B cell (primary cell): ENCODE measurements at regions of chr17 and their contacts with region 1.

Region 1: DNA sequence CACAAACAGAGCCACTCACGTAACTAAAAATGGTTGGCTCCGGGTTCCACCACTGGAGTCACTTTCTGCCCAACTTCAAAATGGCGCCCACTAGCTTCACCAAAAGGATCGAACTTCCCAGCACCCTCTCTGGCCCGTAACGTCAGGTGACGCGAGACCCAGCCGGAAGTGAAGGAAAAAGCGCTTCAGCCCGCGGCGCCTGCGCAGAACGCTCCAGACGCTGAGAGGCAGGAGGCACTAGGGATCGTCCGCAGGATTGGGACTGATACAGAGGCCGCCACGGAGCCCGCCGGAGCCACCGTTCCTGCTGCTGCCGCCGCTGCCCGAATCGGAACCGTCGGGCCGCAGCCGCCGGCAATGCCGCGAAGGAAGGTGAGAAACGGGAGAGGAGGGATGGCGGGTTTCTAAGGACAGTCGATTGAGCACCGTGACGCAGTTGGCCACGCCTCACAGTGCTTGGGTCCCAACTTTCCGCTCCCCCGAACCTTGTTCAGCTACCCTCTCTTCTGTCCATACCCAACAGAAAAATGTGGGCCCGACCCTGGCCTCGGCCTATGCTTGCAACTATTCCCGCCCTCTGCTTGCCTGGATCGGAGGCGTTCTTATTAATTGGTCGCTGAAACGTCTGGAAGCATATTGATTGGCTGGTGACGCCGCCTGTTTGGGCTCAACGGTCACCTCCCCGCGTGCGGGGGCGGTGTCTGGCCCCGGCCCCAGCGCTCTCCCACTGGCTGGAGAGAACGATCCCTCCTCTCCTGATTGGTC is at the start of gene KAT7:
- DNase-seq: peak; percentile 99
- ATAC-seq: peak; percentile 83
- H3K4me3 ChIP-seq: peak within 1 kb of the TSS; percentile 68 to 100 (median 96)
- H3K4me3 Mint-ChIP-seq: peak within 1 kb of the TSS; percentile 98
- H3K27ac ChIP-seq: peak within 1 kb of the TSS; percentile 89 to 98
- H3K27ac Mint-ChIP-seq: peak within 1 kb of the TSS; percentile 99
- H3K4me1 ChIP-seq: peaks cover 18 to 20% of the 10 kb centered on the region in 2 donors
- H3K4me1 Mint-ChIP-seq: peaks cover 50% of the 10 kb centered on the region
- H3K27me3 ChIP-seq: no peaks in the 10 kb centered on the region
- H3K27me3 Mint-ChIP-seq: no peaks in the 10 kb centered on the region
- CTCF ChIP-seq: no peak
- total RNA-seq, gene KAT7: 124 and 127 TPM in 2 replicates

Region 2: GRCh38 chr17:48908047-48908843 is 880.4 kb before region 1 on chr17 and contains the start of gene UBE2Z:
- CTCF ChIA-PET with region 1: no interaction called
- POLR2A ChIA-PET with region 1: no interaction called
- intact Hi-C with region 1: loop called (anchors 2 kb)
- DNase-seq: peak; percentile 96
- ATAC-seq: peak; percentile 90
- H3K4me3 ChIP-seq: peak within 1 kb of the TSS; percentile 36 to 79 (median 72)
- H3K4me3 Mint-ChIP-seq: peak within 1 kb of the TSS; percentile 95
- H3K27ac ChIP-seq: peak within 1 kb of the TSS; percentile 78 to 82
- H3K27ac Mint-ChIP-seq: peak within 1 kb of the TSS; percentile 99
- H3K4me1 ChIP-seq: peaks cover 26 to 30% of the 10 kb centered on the region in 2 donors
- H3K4me1 Mint-ChIP-seq: peaks cover 45% of the 10 kb centered on the region
- H3K27me3 ChIP-seq: no peaks in the 10 kb centered on the region
- H3K27me3 Mint-ChIP-seq: no peaks in the 10 kb centered on the region
- CTCF ChIP-seq: no peak
- total RNA-seq, gene UBE2Z: 121 and 122 TPM in 2 replicates

Region 3: GRCh38 chr17:49567871-49568694 is 220.6 kb before region 1 on chr17:
- CTCF ChIA-PET with region 1: interaction called, 3 read pairs
- POLR2A ChIA-PET with region 1: interaction called, 4 read pairs
- intact Hi-C with region 1: loop called (anchors 2 kb)
- DNase-seq: peak; percentile 88
- ATAC-seq: peak; percentile 66
- H3K4me3 ChIP-seq: peak overlapping the region in 3 of 5 experiments; percentile 20 to 39 (median 23)
- H3K4me3 Mint-ChIP-seq: peak overlapping the region; percentile 79
- H3K27ac ChIP-seq: no peak overlapping the region
- H3K27ac Mint-ChIP-seq: peak overlapping the region; percentile 32
- H3K4me1 ChIP-seq: peaks cover 6 to 17% of the 10 kb centered on the region in 2 donors
- H3K4me1 Mint-ChIP-seq: peaks cover 19% of the 10 kb centered on the region
- H3K27me3 ChIP-seq: peaks cover 0 to 42% (median 9%) of the 10 kb centered on the region in 4 experiments
- H3K27me3 Mint-ChIP-seq: peaks cover 36% of the 10 kb centered on the region
- CTCF ChIP-seq: peak; percentile 93

Region 4: DNA sequence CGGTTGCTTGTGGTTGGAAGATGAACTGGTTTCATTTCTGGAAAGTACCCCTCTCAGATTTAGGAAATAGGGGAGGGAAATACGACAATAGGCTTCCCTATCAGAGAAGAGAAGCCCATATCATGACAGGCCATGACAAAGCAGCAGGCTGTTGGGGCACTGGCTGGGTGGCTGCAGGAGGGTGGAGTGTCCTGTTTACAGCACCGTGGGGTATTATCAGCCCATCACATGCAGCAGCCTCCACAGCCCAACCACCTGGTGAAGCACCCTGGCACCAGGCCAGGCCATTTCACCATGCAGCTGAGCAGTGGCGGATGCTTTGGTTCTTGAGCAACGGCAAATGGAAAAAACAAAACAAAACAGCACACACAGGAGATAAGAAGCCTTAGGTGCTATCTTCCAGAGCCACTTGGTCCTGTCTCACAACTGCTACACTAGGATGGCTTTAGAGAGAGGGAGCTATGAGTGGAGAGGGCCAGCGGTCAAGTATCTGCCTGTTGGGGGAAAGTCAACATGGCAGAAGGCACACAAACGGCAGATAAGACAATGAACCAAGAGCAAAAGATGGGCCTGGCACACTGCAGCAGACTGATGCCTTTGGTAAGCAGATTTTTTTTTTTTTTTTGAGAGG is 48.9 kb before region 1 on chr17:
- CTCF ChIA-PET with region 1: interaction called, 3 read pairs
- POLR2A ChIA-PET with region 1: interaction called, 7 read pairs
- intact Hi-C with region 1: loop called (anchors 1 kb)
- DNase-seq: peak; percentile 97
- ATAC-seq: peak; percentile 96
- H3K4me3 ChIP-seq: peak overlapping the region; percentile 4 to 57 (median 52)
- H3K4me3 Mint-ChIP-seq: peak overlapping the region; percentile 95
- H3K27ac ChIP-seq: peak overlapping the region; percentile 89 to 98
- H3K27ac Mint-ChIP-seq: peak overlapping the region; percentile 100
- H3K4me1 ChIP-seq: peaks cover 76 to 84% of the 10 kb centered on the region in 2 donors
- H3K4me1 Mint-ChIP-seq: peaks cover 85% of the 10 kb centered on the region
- H3K27me3 ChIP-seq: no peaks in the 10 kb centered on the region
- H3K27me3 Mint-ChIP-seq: no peaks in the 10 kb centered on the region
- CTCF ChIP-seq: no peak

Region 5: GRCh38 chr17:49748791-49749190 is 39.9 kb before region 1 on chr17:
- CTCF ChIA-PET with region 1: no interaction called
- POLR2A ChIA-PET with region 1: interaction called, 15 read pairs
- intact Hi-C with region 1: loop called (anchors 2 kb)
- DNase-seq: peak; percentile 67
- ATAC-seq: peak; percentile 64
- H3K4me3 ChIP-seq: peak overlapping the region in 1 of 5 experiments; percentile 6
- H3K4me3 Mint-ChIP-seq: peak overlapping the region; percentile 93
- H3K27ac ChIP-seq: peak overlapping the region; percentile 89 to 95
- H3K27ac Mint-ChIP-seq: peak overlapping the region; percentile 98
- H3K4me1 ChIP-seq: peaks cover 68 to 78% of the 10 kb centered on the region in 2 donors
- H3K4me1 Mint-ChIP-seq: peaks cover 82% of the 10 kb centered on the region
- H3K27me3 ChIP-seq: no peaks in the 10 kb centered on the region
- H3K27me3 Mint-ChIP-seq: no peaks in the 10 kb centered on the region
- CTCF ChIP-seq: no peak

Region 6: DNA sequence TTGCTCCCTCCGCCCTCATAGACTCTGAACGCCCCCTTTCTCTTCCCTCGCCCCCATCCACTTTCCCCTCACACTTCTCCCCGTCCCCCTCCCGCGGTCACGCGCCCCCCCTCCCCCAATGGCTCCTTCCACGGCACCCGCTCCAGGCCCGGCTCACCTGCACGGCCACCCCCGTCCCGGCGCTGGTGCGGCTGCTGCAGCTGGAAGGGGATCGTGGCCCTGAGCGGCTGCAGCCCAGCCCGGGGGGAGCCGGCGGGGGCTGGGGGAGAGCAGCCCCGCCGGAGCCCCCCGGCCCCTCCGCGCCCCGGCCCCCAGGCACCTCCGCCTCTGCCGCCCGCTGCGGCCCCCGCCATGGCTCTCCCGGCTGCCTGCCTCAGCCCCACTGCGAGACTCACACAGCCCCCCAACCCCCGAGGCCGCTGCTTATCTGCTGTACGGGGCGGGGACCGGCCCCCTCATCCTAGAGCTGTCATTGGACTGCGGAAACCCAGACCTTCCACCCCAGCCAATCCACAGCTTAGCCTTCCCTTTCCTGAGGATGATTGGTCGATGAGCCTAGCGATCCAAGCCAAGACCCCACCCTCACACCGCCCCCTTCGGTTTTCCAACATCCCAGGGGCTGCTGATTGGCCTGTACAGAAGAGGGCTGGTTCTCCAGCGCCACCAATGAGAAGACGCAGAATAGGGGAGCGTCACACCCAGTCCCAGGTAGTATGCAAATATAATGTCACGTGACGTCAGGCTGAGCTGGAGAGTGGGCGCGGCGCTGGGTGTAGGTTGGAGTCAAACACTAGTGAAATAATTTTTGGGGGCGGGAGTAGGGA is 24.7 kb before region 1 on chr17 and contains the start of gene FAM117A:
- CTCF ChIA-PET with region 1: interaction called, 10 read pairs
- POLR2A ChIA-PET with region 1: interaction called, 20 read pairs
- intact Hi-C with region 1: loop called (anchors 1 kb)
- DNase-seq: peak; percentile 98
- ATAC-seq: peak; percentile 89
- H3K4me3 ChIP-seq: peak within 1 kb of the TSS; percentile 63 to 77 (median 76)
- H3K4me3 Mint-ChIP-seq: peak within 1 kb of the TSS; percentile 96
- H3K27ac ChIP-seq: peak within 1 kb of the TSS; percentile 39 to 63
- H3K27ac Mint-ChIP-seq: peak within 1 kb of the TSS; percentile 87
- H3K4me1 ChIP-seq: peaks cover 42 to 46% of the 10 kb centered on the region in 2 donors
- H3K4me1 Mint-ChIP-seq: peaks cover 52% of the 10 kb centered on the region
- H3K27me3 ChIP-seq: no peaks in the 10 kb centered on the region
- H3K27me3 Mint-ChIP-seq: no peaks in the 10 kb centered on the region
- CTCF ChIP-seq: no peak
- total RNA-seq, gene FAM117A: 93.3 and 93.4 TPM in 2 replicates

Region 7: GRCh38 chr17:50719144-50719923 is 930.7 kb after region 1 on chr17 and contains the start of gene LUC7L3:
- CTCF ChIA-PET with region 1: no interaction called
- POLR2A ChIA-PET with region 1: no interaction called
- intact Hi-C with region 1: loop called (anchors 5 kb)
- DNase-seq: peak; percentile 96
- ATAC-seq: peak; percentile 93
- H3K4me3 ChIP-seq: peak within 1 kb of the TSS; percentile 75 to 97 (median 87)
- H3K4me3 Mint-ChIP-seq: peak within 1 kb of the TSS; percentile 98
- H3K27ac ChIP-seq: peak within 1 kb of the TSS; percentile 96 to 97
- H3K27ac Mint-ChIP-seq: peak within 1 kb of the TSS; percentile 99
- H3K4me1 ChIP-seq: peaks cover 31 to 32% of the 10 kb centered on the region in 2 donors
- H3K4me1 Mint-ChIP-seq: peaks cover 36% of the 10 kb centered on the region
- H3K27me3 ChIP-seq: no peaks in the 10 kb centered on the region
- H3K27me3 Mint-ChIP-seq: no peaks in the 10 kb centered on the region
- CTCF ChIP-seq: no peak
- total RNA-seq, gene LUC7L3: 305 and 311 TPM in 2 replicates